ENCODE measurements at regions of chr11 and their contacts with region 1.

Region 1: DNA sequence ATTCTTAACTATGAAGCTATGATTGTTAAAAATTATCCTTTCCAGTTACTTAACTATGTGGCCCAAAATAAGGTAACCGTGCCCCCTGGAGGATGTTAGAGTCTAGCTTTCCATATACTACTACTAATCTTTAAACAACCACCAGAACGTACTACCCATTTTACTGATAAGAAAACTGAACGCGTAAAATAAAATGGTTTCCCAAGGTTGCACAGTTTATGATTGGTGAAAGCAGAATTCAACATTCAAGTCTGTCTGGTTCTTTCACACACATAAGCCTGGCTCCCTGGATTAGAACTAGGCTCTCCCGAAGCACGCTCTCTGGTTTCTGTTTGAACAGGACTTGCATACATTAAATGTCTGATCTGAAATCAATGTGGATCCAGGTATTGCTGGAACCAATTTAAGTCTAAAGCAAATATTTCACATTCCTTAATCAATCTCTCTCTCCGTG is 437.9 kb upstream of the CCDC90B start:
- DNase-seq: no peak
- ATAC-seq: peak in 3 of 4 donors; percentile 30 to 71 (median 52)
- H3K4me3 ChIP-seq: peak overlapping the region; percentile 51
- H3K27ac ChIP-seq: no peak overlapping the region
- H3K4me1 ChIP-seq: no peaks in the 10 kb centered on the region
- H3K27me3 ChIP-seq: no peaks in the 10 kb centered on the region
- CTCF ChIP-seq: peak; percentile 34

Region 2: GRCh38 chr11:83292709-83293456 is 431.2 kb before region 1 on chr11:
- intact Hi-C with region 1: loop called (anchors 5 to 10 kb)
- DNase-seq: no peak
- ATAC-seq: peak in 3 of 4 donors; percentile 54 to 83 (median 65)
- H3K4me3 ChIP-seq: peak overlapping the region; percentile 28
- H3K27ac ChIP-seq: no peak overlapping the region
- H3K4me1 ChIP-seq: no peaks in the 10 kb centered on the region
- H3K27me3 ChIP-seq: no peaks in the 10 kb centered on the region
- CTCF ChIP-seq: peak; percentile 55

Region 3: GRCh38 chr11:83918476-83918875 is 194.4 kb after region 1 on chr11:
- intact Hi-C with region 1: no loop called
- DNase-seq: peak; percentile 22 to 49
- ATAC-seq: no peak
- H3K4me3 ChIP-seq: no peak overlapping the region
- H3K27ac ChIP-seq: no peak overlapping the region
- H3K4me1 ChIP-seq: no peaks in the 10 kb centered on the region
- H3K27me3 ChIP-seq: no peaks in the 10 kb centered on the region
- CTCF ChIP-seq: no peak

Region 4: GRCh38 chr11:83990160-83990733 is 266.2 kb after region 1 on chr11:
- intact Hi-C with region 1: no loop called
- DNase-seq: peak; percentile 14 to 38
- ATAC-seq: no peak
- H3K4me3 ChIP-seq: no peak overlapping the region
- H3K27ac ChIP-seq: no peak overlapping the region
- H3K4me1 ChIP-seq: no peaks in the 10 kb centered on the region
- H3K27me3 ChIP-seq: no peaks in the 10 kb centered on the region
- CTCF ChIP-seq: no peak